Activated CD4-positive, alpha-beta T cell treated with anti-CD3 and anti-CD28 coated beads for 36 hours (primary cell): ENCODE measurements at regions of chr21 and their contacts with region 1.

Region 1: GRCh38 chr21:24118738-24119459 is 1488.4 kb downstream of the MRPL39 start:
- DNase-seq: no peak
- ATAC-seq: no peak
- H3K4me3 Mint-ChIP-seq: no peak overlapping the region
- H3K27ac Mint-ChIP-seq: no peak overlapping the region
- H3K4me1 Mint-ChIP-seq: no peaks in the 10 kb centered on the region
- H3K27me3 Mint-ChIP-seq: no peaks in the 10 kb centered on the region

Region 2: DNA sequence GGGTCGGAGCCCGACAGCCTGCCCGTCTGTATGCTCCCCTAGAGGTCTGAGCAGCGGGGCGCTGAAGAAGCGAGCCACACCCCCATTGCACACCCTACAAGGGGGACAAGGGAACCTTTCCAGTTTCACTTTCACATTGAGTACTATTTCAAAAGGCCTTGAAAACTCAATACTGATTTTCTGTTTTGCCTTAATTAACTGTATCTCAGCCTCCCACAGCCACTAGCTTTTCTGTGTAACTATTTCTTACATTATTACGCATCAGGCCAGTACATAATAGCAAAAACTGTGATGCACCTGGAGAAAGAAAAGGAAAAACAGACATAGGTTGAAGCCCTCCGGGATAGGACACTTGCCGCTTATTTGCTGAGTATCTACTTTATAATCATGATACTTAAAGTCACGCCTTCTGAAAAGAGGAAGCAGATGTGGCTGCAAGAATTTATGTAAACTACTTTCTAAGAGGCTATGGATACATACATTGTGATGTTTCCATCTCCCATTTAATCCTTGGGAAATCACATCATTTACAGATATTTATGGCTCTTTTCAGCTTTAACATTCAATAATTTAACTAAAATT is 231.1 kb before region 1 on chr21:
- CTCF ChIA-PET with region 1: no interaction called
- POLR2A ChIA-PET with region 1: no interaction called
- intact Hi-C with region 1: no loop called
- DNase-seq: peak; percentile 10
- ATAC-seq: peak; percentile 36
- H3K4me3 Mint-ChIP-seq: peak overlapping the region; percentile 39
- H3K27ac Mint-ChIP-seq: no peak overlapping the region
- H3K4me1 Mint-ChIP-seq: no peaks in the 10 kb centered on the region
- H3K27me3 Mint-ChIP-seq: no peaks in the 10 kb centered on the region

Region 3: DNA sequence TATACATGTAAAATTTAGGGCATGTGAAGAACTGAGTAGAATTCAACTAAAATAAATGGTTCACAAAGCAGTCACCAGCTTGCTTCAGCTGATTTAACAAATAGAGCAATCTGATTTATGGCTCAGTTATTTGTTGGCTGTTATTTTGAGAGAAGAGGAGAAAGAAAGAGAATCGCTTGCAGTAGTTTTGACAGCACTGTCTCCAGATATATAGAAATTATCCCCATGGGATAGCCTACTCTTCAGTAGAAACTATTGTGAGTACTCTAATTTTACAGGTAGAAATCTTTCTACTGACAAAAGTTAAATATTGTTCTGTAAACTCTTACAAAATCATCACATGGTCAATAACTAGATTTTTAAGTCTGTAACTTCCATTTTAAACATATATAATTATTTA is 390.2 kb after region 1 on chr21:
- CTCF ChIA-PET with region 1: no interaction called
- POLR2A ChIA-PET with region 1: no interaction called
- intact Hi-C with region 1: loop called in 1 of 2 experiments (anchors 10 kb)
- DNase-seq: no peak
- ATAC-seq: no peak
- H3K4me3 Mint-ChIP-seq: no peak overlapping the region
- H3K27ac Mint-ChIP-seq: no peak overlapping the region
- H3K4me1 Mint-ChIP-seq: no peaks in the 10 kb centered on the region
- H3K27me3 Mint-ChIP-seq: no peaks in the 10 kb centered on the region